B cell (primary cell): ENCODE measurements at regions of chr12 and their contacts with region 1.

Region 1: DNA sequence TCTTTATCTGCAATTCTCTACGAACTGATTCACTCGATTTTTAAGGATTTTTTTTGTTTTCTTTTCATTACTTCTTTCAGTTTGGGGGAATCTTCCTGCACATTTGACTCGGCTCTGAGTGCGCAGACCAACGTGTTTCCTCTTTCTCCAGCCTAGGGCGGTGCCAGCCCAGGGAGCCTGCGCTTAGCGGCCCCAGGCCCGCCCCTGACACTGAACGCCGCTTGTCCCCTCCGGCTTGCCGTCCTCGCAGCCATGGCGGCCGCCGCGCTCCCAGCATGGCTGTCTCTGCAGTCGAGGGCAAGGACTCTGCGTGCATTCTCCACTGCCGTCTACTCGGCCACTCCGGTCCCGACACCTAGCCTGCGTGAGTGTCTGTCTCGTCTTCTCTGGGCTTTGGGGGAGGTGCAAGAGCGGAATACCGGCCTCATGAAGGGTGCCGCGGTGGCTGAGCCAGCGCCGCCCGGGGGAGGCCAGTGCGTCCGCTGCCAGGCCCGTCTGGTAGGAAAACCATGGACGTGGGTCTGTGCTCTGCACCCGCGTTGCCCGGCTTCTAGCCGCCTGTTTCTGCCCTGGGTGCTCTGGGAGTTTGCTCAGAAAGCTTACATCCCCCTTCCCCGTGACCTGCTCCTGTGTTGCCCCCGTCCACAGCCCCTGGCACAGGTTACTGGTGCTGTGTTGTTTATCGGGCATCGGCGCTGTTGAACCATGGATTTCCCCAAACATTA is at the start of gene MRPS35:
- DNase-seq: peak; percentile 95
- ATAC-seq: peak; percentile 99
- H3K4me3 ChIP-seq: peak within 1 kb of the TSS; percentile 71 to 96 (median 92)
- H3K4me3 Mint-ChIP-seq: peak within 1 kb of the TSS; percentile 97
- H3K27ac ChIP-seq: peak within 1 kb of the TSS; percentile 68 to 80
- H3K27ac Mint-ChIP-seq: peak within 1 kb of the TSS; percentile 97
- H3K4me1 ChIP-seq: peaks cover 12 to 16% of the 10 kb centered on the region in 2 donors
- H3K4me1 Mint-ChIP-seq: peaks cover 31% of the 10 kb centered on the region
- H3K27me3 ChIP-seq: peaks cover 0 to 4% (median 0%) of the 10 kb centered on the region in 4 experiments
- H3K27me3 Mint-ChIP-seq: peaks cover 7% of the 10 kb centered on the region
- CTCF ChIP-seq: no peak
- total RNA-seq, gene MRPS35: 18.0 and 24.5 TPM in 2 replicates

Region 2: DNA sequence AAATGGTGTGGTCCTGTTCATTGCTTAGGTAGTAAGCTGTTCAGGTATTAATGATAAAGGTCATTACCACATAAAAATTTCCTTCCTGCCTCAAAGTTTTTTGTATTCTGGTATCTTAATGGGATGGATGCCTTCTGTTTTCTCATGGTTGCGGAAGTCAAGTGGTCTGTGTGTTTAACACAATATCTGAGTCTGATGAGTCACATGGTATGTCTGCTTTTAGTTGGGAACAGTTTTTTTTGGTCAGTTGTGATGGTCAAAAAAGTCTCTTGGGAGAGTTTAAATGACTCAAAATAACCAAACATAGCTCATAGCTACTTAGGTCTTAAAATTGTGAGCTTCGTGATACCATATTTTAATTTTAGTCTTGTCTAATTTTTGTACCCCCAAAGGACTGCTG is 426.0 kb before region 1 on chr12:
- CTCF ChIA-PET with region 1: no interaction called
- POLR2A ChIA-PET with region 1: no interaction called
- intact Hi-C with region 1: no loop called
- DNase-seq: no peak
- ATAC-seq: no peak
- H3K4me3 ChIP-seq: no peak overlapping the region
- H3K4me3 Mint-ChIP-seq: no peak overlapping the region
- H3K27ac ChIP-seq: no peak overlapping the region
- H3K27ac Mint-ChIP-seq: no peak overlapping the region
- H3K4me1 ChIP-seq: peaks cover 0 to 3% of the 10 kb centered on the region in 2 donors
- H3K4me1 Mint-ChIP-seq: peaks cover 17% of the 10 kb centered on the region
- H3K27me3 ChIP-seq: no peaks in the 10 kb centered on the region
- H3K27me3 Mint-ChIP-seq: no peaks in the 10 kb centered on the region
- CTCF ChIP-seq: no peak

Region 3: DNA sequence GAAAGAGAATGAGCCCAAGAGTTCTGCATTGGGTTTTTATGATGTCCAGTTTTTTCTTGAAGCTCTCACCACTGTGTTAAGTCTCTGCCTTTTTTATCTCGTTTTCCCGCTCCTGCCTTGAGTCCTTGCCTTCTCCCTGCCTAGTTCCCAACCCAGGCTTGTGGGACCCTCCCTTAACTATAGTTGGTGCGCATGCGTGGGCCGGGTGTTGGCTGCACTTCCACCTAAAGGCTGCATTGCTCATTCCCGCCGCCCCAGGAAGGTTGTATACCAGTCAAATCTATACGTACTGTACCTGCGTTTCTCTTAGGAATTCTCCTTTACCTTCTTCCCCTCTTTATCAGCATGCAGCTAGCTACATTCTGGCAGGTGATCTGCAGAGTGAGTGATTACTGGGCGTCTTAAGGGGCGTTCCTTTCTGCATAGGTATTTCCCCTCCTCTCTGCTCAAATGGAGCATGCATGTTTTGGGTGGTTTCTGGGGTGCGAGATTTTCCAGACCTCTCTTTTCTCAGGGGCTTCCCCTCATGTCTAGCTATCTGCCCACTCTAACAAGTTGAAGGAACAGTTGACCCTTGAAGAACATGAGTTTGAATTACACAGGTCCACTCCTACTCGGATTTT is 21.1 kb before region 1 on chr12:
- CTCF ChIA-PET with region 1: no interaction called
- POLR2A ChIA-PET with region 1: no interaction called
- intact Hi-C with region 1: no loop called
- DNase-seq: no peak
- ATAC-seq: no peak
- H3K4me3 ChIP-seq: no peak overlapping the region
- H3K4me3 Mint-ChIP-seq: no peak overlapping the region
- H3K27ac ChIP-seq: no peak overlapping the region
- H3K27ac Mint-ChIP-seq: no peak overlapping the region
- H3K4me1 ChIP-seq: no peaks in the 10 kb centered on the region
- H3K4me1 Mint-ChIP-seq: no peaks in the 10 kb centered on the region
- H3K27me3 ChIP-seq: no peaks in the 10 kb centered on the region
- H3K27me3 Mint-ChIP-seq: peaks cover 2% of the 10 kb centered on the region
- CTCF ChIP-seq: no peak

Region 4: DNA sequence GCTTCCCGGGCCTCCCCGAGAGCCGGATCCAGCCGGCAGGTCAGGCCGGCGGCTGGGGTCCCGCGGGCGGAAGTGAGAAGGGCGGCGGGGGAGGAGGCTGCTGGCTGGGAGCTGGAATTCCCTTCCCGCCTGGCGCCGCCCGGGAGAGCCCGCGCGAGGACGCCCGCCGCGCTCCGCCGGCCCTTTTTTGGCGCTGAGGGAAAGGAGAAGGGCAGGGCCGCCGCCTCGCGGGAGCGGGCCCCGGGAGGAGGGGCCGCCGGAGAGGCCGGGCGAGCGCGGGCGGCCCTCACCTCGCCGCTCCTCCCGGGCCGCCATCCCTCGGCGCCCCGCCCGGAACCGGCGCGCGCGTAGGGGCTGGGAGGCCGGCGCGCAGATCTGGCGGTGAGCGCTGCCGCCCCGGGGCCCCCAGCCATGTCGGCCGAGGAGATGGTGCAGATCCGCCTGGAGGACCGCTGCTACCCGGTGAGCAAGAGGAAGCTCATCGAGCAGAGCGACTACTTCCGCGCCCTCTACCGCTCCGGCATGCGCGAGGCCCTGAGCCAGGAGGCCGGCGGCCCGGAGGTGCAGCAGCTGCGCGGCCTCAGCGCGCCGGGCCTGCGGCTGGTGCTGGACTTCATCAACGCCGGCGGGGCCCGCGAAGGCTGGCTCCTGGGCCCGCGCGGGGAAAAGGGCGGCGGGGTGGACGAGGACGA is 69.3 kb after region 1 on chr12 and contains the starts of genes KLHL42 and MANSC4:
- CTCF ChIA-PET with region 1: interaction called, 3 read pairs
- POLR2A ChIA-PET with region 1: interaction called, 9 read pairs
- intact Hi-C with region 1: loop called (anchors 2 kb)
- DNase-seq: peak; percentile 83
- ATAC-seq: peak; percentile 86
- H3K4me3 ChIP-seq: peak within 1 kb of the TSS; percentile 39 to 81 (median 67)
- H3K4me3 Mint-ChIP-seq: peak within 1 kb of the TSS; percentile 90
- H3K27ac ChIP-seq: peak within 1 kb of the TSS in 1 of 2 donors; percentile 69
- H3K27ac Mint-ChIP-seq: peak within 1 kb of the TSS; percentile 90
- H3K4me1 ChIP-seq: peaks cover 11 to 15% of the 10 kb centered on the region in 2 donors
- H3K4me1 Mint-ChIP-seq: peaks cover 29% of the 10 kb centered on the region
- H3K27me3 ChIP-seq: no peaks in the 10 kb centered on the region
- H3K27me3 Mint-ChIP-seq: no peaks in the 10 kb centered on the region
- CTCF ChIP-seq: no peak
- total RNA-seq, gene KLHL42: 20.5 and 21.9 TPM in 2 replicates
- total RNA-seq, gene MANSC4: not detected in 2 replicates

Region 5: DNA sequence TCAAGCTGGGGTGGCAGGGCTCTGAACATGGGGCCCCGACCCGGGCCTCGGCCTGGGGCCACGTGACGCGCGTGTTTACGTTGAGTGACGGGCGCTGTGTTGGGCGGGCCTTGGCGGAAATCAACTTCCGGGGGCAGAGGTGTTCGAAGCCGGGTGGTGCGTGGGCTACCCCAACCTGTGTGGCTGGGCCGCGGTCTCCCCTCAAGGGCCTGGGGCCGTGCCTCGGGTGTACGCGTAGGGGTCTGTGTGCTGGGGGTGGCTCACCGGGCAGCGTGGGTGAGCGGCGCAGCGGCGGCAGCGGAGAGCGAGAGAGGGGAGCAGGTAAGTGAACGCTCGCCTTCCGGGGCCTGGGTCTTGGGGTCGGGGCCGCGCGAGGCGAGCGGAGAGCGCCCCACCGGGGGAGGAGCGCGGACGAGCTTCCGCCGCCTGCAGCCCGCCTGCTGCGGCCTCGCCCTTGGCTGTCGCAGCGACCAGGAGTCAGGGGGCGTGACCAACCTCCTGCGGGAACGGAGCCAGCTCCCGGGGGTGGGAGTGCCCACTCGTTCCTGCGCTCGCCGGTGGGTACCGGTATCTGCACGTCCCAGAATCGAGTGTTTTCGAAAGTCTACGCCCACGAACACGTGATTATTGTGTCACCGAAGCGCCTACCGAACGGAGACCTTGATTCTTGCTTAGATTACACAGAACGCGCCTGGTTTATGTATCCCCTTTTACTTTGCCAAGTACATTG is 479.7 kb after region 1 on chr12 and contains the start of gene CCDC91:
- CTCF ChIA-PET with region 1: no interaction called
- POLR2A ChIA-PET with region 1: no interaction called
- intact Hi-C with region 1: loop called (anchors 2 kb)
- DNase-seq: peak; percentile 92
- ATAC-seq: peak; percentile 81
- H3K4me3 ChIP-seq: peak within 1 kb of the TSS; percentile 82 to 97 (median 92)
- H3K4me3 Mint-ChIP-seq: peak within 1 kb of the TSS; percentile 98
- H3K27ac ChIP-seq: peak within 1 kb of the TSS; percentile 98 to 99
- H3K27ac Mint-ChIP-seq: peak within 1 kb of the TSS; percentile 100
- H3K4me1 ChIP-seq: peaks cover 18 to 22% of the 10 kb centered on the region in 2 donors
- H3K4me1 Mint-ChIP-seq: peaks cover 41% of the 10 kb centered on the region
- H3K27me3 ChIP-seq: no peaks in the 10 kb centered on the region
- H3K27me3 Mint-ChIP-seq: no peaks in the 10 kb centered on the region
- CTCF ChIP-seq: no peak
- total RNA-seq, gene CCDC91: 64.8 and 68.3 TPM in 2 replicates